PC-9 (cell line): ENCODE measurements at regions of chr9 and their contacts with region 1.

Region 1: DNA sequence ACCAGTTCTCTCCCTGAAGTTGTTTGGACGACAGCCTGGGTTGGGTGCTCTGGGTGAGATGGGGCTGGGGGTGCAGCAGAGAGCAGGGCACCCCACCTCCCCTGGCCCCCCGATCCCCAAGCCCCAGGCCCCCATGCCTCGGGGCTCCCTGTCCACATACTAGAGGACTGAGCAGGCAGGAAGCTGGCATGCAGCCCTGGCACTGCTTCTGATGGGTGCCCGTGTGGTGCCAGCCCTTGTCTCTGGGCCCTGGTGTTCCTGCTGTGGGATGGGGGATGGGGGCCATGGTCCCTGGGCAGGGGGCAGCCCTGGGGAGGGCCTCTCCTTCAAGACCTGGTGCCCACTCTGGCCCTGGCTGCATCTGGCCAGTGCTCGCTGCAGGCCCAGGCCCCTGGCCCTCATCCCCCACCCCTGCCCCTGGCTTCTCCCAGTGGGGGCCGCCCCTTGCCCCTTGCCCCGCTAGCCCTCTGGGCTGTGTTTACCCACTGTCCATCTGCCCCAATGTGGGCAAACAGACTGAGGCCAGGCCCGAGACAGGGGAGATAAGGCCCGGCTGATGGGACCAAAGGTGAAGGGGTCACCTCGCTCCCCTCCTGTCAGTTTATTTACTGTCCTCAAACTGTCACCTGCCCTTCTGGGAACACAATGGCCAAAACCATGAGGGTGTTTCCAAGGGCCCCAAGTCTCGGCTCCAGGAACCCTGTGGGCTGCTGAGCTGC is 67.3 kb upstream of the RXRA start:
- DNase-seq: no peak
- H3K4me3 ChIP-seq: no peak overlapping the region
- H3K27ac ChIP-seq: no peak overlapping the region
- H3K4me1 ChIP-seq: no peaks in the 10 kb centered on the region
- H3K27me3 ChIP-seq: peaks cover 24% of the 10 kb centered on the region
- CTCF ChIP-seq: no peak

Region 2: GRCh38 chr9:134242706-134243105 is 16.3 kb before region 1 on chr9:
- CTCF ChIA-PET with region 1: no interaction called
- POLR2A ChIA-PET with region 1: interaction called, 15 read pairs
- intact Hi-C with region 1: no loop called
- DNase-seq: no peak
- H3K4me3 ChIP-seq: no peak overlapping the region
- H3K27ac ChIP-seq: no peak overlapping the region
- H3K4me1 ChIP-seq: no peaks in the 10 kb centered on the region
- H3K27me3 ChIP-seq: peaks cover 45% of the 10 kb centered on the region
- CTCF ChIP-seq: no peak